Calu3 (cell line): ENCODE measurements at regions of chr18 and their contacts with region 1.

Region 1: DNA sequence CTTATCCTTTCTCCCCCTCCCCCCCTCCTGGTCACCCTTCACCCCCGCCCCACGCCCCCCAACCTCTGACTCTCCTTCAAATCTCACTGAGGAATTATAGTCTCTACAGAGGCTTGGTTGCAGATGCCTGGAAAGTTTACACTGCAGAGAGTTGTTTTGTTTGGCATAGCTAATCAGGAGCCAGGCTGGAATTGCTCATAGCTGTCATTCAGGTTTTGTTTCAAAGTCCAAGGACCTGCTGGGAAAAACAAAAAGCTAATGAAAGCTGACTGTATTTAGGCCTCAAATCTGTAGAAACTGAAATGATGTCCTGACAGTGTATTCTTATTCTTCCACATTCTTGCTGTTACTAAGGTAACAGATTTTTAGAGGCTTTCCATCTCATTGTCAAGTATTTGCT is 22.6 kb downstream of the GREB1L start:
- DNase-seq: peak; percentile 8
- H3K4me3 Mint-ChIP-seq: no peak overlapping the region
- H3K27ac Mint-ChIP-seq: no peak overlapping the region
- H3K4me1 Mint-ChIP-seq: peaks cover 18% of the 10 kb centered on the region
- H3K27me3 Mint-ChIP-seq: no peaks in the 10 kb centered on the region
- CTCF ChIP-seq: no peak

Region 2: GRCh38 chr18:21218630-21219261 is 45.9 kb before region 1 on chr18:
- CTCF ChIA-PET with region 1: no interaction called
- intact Hi-C with region 1: loop called (anchors 10 kb)
- DNase-seq: no peak
- H3K4me3 Mint-ChIP-seq: no peak overlapping the region
- H3K27ac Mint-ChIP-seq: no peak overlapping the region
- H3K4me1 Mint-ChIP-seq: no peaks in the 10 kb centered on the region
- H3K27me3 Mint-ChIP-seq: no peaks in the 10 kb centered on the region
- CTCF ChIP-seq: no peak

Region 3: DNA sequence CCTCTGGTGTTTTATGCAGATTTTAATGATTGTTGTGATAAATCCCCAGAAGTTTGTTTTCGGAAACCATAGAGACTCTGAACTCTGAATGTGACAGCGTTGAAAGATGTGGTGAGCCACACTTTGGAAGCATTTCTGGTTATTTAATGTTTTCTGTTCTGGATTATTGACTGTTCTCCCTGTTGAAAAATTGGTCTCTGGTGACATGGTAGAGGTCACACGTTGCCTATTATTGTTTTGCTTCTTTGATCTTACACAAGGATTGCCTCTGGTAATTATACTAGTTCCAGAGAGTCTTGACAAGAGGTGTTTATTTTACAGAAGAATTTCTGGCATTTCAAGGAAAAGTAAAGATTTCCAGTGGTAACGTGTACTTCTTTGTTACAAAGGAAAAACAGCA is 104.5 kb after region 1 on chr18:
- CTCF ChIA-PET with region 1: no interaction called
- intact Hi-C with region 1: loop called (anchors 10 kb)
- DNase-seq: no peak
- H3K4me3 Mint-ChIP-seq: no peak overlapping the region
- H3K27ac Mint-ChIP-seq: no peak overlapping the region
- H3K4me1 Mint-ChIP-seq: no peaks in the 10 kb centered on the region
- H3K27me3 Mint-ChIP-seq: no peaks in the 10 kb centered on the region
- CTCF ChIP-seq: no peak

Region 4: GRCh38 chr18:21404410-21404809 is 139.8 kb after region 1 on chr18:
- CTCF ChIA-PET with region 1: no interaction called
- intact Hi-C with region 1: no loop called
- DNase-seq: no peak
- H3K4me3 Mint-ChIP-seq: no peak overlapping the region
- H3K27ac Mint-ChIP-seq: no peak overlapping the region
- H3K4me1 Mint-ChIP-seq: no peaks in the 10 kb centered on the region
- H3K27me3 Mint-ChIP-seq: no peaks in the 10 kb centered on the region
- CTCF ChIP-seq: no peak